IMR-90 (cell line): ENCODE measurements at regions of chr2 and their contacts with region 1.

Region 1: GRCh38 chr2:17646081-17646554 is 105.6 kb downstream of the VSNL1 start:
- DNase-seq: peak; percentile 88
- ATAC-seq: peak; percentile 76
- H3K4me3 ChIP-seq: no peak overlapping the region
- H3K27ac ChIP-seq: no peak overlapping the region
- H3K4me1 ChIP-seq: peaks cover 21% of the 10 kb centered on the region
- H3K27me3 ChIP-seq: no peaks in the 10 kb centered on the region
- CTCF ChIP-seq: peak; percentile 91
- POLR2A ChIP-seq: no peak
- RAD21 ChIP-seq: peak; percentile 59

Region 2: DNA sequence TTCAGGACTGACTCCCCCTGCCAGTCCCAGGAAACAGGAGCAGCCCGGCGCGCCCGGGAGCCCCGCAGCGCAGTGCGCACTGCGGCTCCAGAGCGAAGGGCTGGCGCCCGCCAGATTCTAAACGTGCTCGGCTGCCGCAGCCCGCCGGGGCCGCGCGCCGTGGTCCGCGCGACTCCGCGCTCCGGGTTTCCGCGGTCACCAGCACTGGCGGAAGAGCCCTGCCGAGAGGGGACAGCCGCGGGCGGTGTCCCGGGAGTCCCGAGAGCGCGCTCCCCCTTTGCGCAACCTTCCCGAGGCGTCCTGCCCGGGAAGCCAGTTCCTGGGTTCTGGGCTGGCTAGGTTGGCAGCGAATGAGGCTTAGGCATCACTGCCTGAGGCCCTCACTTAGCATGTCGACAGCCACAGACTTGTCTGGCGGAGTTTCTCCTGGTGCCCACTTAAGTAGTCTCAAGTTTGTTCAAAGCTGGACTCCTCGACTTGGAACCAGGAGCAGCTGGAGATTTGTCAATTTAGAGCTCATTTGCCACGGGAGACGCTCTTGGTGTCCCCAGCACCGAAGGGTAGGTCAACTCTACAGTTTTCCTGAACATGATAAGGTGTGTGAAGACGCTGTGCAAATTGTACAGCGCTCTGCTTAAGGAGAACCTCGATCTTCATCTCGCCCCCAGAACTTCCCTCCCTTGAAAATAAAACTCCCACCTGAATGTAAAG is 107.1 kb before region 1 on chr2:
- CTCF ChIA-PET with region 1: interaction called, 3 read pairs
- POLR2A ChIA-PET with region 1: no interaction called
- dilution Hi-C with region 1: no loop called
- in situ Hi-C with region 1: no loop called
- intact Hi-C with region 1: loop called (anchors 2 kb)
- DNase-seq: peak; percentile 41
- ATAC-seq: peak; percentile 78
- H3K4me3 ChIP-seq: peak overlapping the region; percentile 38
- H3K27ac ChIP-seq: no peak overlapping the region
- H3K4me1 ChIP-seq: no peaks in the 10 kb centered on the region; the same call in 1 of the 2 replicates
- H3K27me3 ChIP-seq: peaks cover 31% of the 10 kb centered on the region
- CTCF ChIP-seq: no peak
- POLR2A ChIP-seq: no peak
- RAD21 ChIP-seq: no peak

Region 3: GRCh38 chr2:17620280-17620679 is 25.8 kb before region 1 on chr2:
- CTCF ChIA-PET with region 1: interaction called, 9 read pairs
- POLR2A ChIA-PET with region 1: no interaction called
- dilution Hi-C with region 1: no loop called
- in situ Hi-C with region 1: no loop called
- intact Hi-C with region 1: loop called (anchors 2 kb)
- DNase-seq: peak; percentile 4
- ATAC-seq: 0 out of 2 replicates have a peak, but pooled peaks have one; percentile 7
- H3K4me3 ChIP-seq: no peak overlapping the region
- H3K27ac ChIP-seq: no peak overlapping the region
- H3K4me1 ChIP-seq: peaks cover 6% of the 10 kb centered on the region; the same call in 1 of the 2 replicates
- H3K27me3 ChIP-seq: no peaks in the 10 kb centered on the region
- CTCF ChIP-seq: no peak
- POLR2A ChIP-seq: no peak
- RAD21 ChIP-seq: no peak